Activated CD4-positive, alpha-beta memory T cell treated with anti-CD3 and anti-CD28 coated beads, Interleukin-2, amount 10 ng/mL, durations not matched to agents 7 days and 5 days (primary cell): ENCODE measurements at regions of chr2 and their contacts with region 1.

Region 1: DNA sequence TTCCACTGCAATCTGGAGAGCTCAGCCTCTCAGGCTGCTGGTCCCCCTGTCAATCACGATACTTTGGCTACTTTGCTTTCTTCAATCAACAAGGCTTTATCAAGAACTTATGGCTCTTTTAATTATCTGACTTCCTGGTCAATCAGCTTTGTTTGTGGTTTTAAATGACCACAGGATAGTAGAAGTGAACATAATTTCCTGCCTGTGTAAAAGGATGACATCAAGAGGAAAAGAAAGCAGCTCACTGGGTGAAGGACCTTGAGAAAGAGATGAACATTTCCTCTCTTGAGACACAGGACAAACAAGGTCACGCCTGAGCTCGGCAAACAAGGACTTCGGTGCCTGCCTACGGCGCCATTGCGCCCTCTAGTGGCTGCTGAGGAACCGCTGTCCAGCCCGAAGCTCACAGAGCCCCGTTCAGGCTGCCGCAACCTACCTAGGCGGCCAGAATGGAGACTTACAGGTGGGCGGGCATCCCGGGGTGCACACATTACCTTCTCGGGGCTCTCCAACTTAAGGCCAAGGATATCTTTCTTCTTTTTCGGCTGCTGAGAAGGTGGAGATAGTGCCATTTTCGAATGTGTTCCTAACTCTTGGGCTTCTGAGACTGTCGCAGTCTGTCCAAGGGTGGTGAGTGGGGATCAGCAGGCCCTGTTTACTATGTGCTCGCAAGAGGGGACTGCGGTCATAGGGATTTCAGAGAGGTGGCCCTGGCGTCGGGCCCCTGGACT is 54.0 kb downstream of the IL1RL2 start:
- DNase-seq: peak; percentile 89
- H3K4me3 Mint-ChIP-seq: no peak overlapping the region
- H3K27ac Mint-ChIP-seq: peak overlapping the region; percentile 18
- H3K4me1 Mint-ChIP-seq: peaks cover 33% of the 10 kb centered on the region
- H3K27me3 Mint-ChIP-seq: peaks cover 11% of the 10 kb centered on the region

Region 2: DNA sequence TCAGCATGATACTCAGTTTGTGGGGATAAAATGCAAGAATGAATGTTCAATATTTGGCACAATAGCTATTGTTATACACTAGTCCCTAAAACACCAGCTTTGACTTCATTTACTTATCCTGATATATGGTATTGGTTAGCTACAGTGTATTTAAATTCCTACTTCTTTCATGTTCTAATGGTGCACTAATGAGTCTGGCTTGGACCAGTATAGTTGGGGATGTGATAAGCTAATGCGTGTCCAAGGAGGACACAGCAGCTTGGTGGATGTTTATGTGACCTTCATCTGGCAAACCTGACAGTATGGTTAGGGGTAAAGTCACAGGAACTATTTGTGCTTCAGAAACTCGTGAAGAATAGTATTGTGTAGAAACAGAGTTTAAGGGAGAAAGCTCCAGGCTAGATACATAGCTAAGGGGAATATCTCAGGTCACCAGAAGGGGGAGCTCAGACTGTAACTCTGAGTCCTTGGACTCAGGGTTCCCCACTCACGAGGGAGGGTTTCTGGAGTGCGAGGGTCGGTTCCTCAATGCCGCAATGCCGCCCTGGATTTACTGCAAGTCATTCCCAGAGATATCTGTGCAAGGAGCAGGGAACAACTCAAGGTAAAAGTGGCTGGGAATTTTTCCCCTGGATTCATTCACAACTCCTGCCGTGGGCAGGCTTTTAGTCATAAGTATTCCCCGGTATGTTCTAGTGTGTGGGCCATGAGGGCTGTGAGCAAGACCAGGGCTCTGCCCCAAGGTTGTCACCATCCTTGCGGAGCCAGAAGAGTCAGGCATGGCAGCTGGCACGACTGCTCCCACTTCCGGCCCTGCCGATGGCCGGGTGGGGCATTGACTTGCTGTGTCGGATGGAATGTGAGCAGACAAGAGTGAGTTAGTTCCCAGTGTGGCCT is 234.6 kb before region 1 on chr2:
- CTCF ChIA-PET with region 1: interaction called, 91 read pairs
- POLR2A ChIA-PET with region 1: interaction called, 5 read pairs
- DNase-seq: no peak
- H3K4me3 Mint-ChIP-seq: no peak overlapping the region
- H3K27ac Mint-ChIP-seq: no peak overlapping the region
- H3K4me1 Mint-ChIP-seq: peaks cover 18% of the 10 kb centered on the region
- H3K27me3 Mint-ChIP-seq: no peaks in the 10 kb centered on the region

Region 3: GRCh38 chr2:102033031-102033749 is 207.6 kb before region 1 on chr2:
- CTCF ChIA-PET with region 1: interaction called, 46 read pairs
- POLR2A ChIA-PET with region 1: no interaction called
- DNase-seq: peak; percentile 39
- H3K4me3 Mint-ChIP-seq: no peak overlapping the region
- H3K27ac Mint-ChIP-seq: peak overlapping the region; percentile 72
- H3K4me1 Mint-ChIP-seq: peaks cover 47% of the 10 kb centered on the region
- H3K27me3 Mint-ChIP-seq: no peaks in the 10 kb centered on the region

Region 4: DNA sequence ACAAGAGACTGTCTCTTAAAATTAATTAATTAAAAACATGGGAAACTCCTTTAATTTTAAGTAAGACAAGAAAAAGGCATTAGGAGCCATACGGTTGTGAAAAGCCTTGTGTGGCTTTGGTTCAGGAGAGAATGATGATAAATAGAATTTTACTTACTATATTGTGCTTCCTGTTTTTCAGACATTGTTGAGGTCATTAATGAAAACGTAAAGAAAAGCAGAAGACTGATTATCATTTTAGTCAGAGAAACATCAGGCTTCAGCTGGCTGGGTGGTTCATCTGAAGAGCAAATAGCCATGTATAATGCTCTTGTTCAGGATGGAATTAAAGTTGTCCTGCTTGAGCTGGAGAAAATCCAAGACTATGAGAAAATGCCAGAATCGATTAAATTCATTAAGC is 64.6 kb before region 1 on chr2:
- CTCF ChIA-PET with region 1: no interaction called
- POLR2A ChIA-PET with region 1: no interaction called
- DNase-seq: no peak
- H3K4me3 Mint-ChIP-seq: no peak overlapping the region
- H3K27ac Mint-ChIP-seq: no peak overlapping the region
- H3K4me1 Mint-ChIP-seq: peaks cover 1% of the 10 kb centered on the region
- H3K27me3 Mint-ChIP-seq: peaks cover 2% of the 10 kb centered on the region

Region 5: GRCh38 chr2:102187496-102188150 is 53.2 kb before region 1 on chr2:
- CTCF ChIA-PET with region 1: interaction called, 11 read pairs
- POLR2A ChIA-PET with region 1: interaction called, 5 read pairs
- DNase-seq: peak; percentile 35
- H3K4me3 Mint-ChIP-seq: peak overlapping the region; percentile 66
- H3K27ac Mint-ChIP-seq: no peak overlapping the region
- H3K4me1 Mint-ChIP-seq: peaks cover 18% of the 10 kb centered on the region
- H3K27me3 Mint-ChIP-seq: peaks cover 22% of the 10 kb centered on the region

Region 6: DNA sequence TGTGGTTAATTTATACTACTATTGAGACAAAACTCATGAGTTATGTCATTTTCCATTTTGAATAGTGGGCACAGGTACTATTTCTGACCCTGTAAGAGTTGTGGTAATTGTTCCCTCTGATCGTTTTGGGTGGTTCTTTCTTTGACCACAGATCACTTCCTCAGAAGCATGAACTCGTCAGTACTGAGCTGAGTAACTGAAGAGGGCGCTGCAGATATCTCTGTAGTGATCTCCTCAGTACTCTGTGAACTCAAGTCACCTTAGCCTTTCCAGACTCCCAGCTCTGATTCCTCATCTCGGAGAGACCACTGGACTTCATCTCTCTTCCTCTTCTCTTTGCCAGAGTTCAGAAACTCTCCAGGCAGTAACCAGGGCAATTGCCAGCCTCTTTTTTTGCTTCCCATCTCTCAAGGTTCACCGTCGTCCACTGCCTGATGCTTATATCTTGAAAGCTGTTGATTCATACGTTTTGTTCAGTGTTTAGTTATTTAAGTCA is 61.1 kb after region 1 on chr2:
- CTCF ChIA-PET with region 1: interaction called, 11 read pairs
- POLR2A ChIA-PET with region 1: no interaction called
- DNase-seq: peak; percentile 61
- H3K4me3 Mint-ChIP-seq: peak overlapping the region; percentile 3
- H3K27ac Mint-ChIP-seq: peak overlapping the region; percentile 9
- H3K4me1 Mint-ChIP-seq: peaks cover 42% of the 10 kb centered on the region
- H3K27me3 Mint-ChIP-seq: peaks cover 26% of the 10 kb centered on the region

Region 7: DNA sequence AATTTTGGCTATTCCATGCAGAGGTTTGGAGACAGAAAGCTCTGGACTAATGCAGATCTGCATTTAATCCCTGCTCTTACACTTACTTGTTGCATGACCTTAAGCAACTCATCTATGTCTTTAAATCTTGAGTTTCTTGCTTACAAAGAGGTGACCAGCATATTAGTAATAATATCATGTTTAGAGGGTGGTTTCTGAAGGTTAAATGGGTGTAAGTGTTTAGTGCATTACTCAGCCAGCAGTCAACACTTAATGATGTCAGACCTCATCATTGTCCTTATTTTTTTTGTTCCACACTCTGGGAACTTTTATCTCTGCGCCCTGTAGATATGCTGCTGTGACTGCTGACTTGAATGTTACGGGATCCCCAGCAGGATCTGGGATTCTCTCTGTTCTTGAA is 72.2 kb after region 1 on chr2:
- CTCF ChIA-PET with region 1: no interaction called
- POLR2A ChIA-PET with region 1: no interaction called
- DNase-seq: no peak
- H3K4me3 Mint-ChIP-seq: no peak overlapping the region
- H3K27ac Mint-ChIP-seq: no peak overlapping the region
- H3K4me1 Mint-ChIP-seq: peaks cover 8% of the 10 kb centered on the region
- H3K27me3 Mint-ChIP-seq: peaks cover 2% of the 10 kb centered on the region

Region 8: GRCh38 chr2:102449370-102449974 is 208.7 kb after region 1 on chr2:
- CTCF ChIA-PET with region 1: interaction called, 46 read pairs
- POLR2A ChIA-PET with region 1: no interaction called
- DNase-seq: peak; percentile 74
- H3K4me3 Mint-ChIP-seq: no peak overlapping the region
- H3K27ac Mint-ChIP-seq: no peak overlapping the region
- H3K4me1 Mint-ChIP-seq: no peaks in the 10 kb centered on the region
- H3K27me3 Mint-ChIP-seq: no peaks in the 10 kb centered on the region

Region 9: DNA sequence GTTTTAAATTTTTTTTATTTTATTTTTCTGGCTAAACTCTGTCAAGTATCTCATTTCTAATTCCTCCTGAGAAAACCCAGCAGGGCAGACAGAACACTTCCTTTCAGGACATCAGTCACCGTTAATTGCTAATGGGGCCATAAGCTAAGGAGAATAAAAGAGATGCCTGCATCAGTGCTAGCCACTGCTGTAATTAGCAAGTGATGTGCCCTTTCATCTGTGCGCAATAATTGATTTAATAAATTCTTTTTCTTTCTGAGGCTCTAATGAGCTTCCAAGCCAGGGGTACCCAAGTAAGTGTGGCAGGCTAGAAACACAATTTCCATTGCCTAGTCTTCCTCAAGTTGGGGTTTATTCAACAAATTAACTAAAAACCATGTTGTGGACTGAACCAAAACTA is 297.7 kb after region 1 on chr2:
- CTCF ChIA-PET with region 1: no interaction called
- POLR2A ChIA-PET with region 1: no interaction called
- DNase-seq: no peak
- H3K4me3 Mint-ChIP-seq: no peak overlapping the region
- H3K27ac Mint-ChIP-seq: no peak overlapping the region
- H3K4me1 Mint-ChIP-seq: no peaks in the 10 kb centered on the region
- H3K27me3 Mint-ChIP-seq: peaks cover 7% of the 10 kb centered on the region